Right ventricle myocardium superior (tissue), 1 donor: ENCODE measurements at regions of chr18 and their contacts with region 1.

Region 1: GRCh38 chr18:79011300-79011870 is 31.8 kb downstream of the SALL3 start:
- DNase-seq: no peak
- ATAC-seq: no peak

Region 2: DNA sequence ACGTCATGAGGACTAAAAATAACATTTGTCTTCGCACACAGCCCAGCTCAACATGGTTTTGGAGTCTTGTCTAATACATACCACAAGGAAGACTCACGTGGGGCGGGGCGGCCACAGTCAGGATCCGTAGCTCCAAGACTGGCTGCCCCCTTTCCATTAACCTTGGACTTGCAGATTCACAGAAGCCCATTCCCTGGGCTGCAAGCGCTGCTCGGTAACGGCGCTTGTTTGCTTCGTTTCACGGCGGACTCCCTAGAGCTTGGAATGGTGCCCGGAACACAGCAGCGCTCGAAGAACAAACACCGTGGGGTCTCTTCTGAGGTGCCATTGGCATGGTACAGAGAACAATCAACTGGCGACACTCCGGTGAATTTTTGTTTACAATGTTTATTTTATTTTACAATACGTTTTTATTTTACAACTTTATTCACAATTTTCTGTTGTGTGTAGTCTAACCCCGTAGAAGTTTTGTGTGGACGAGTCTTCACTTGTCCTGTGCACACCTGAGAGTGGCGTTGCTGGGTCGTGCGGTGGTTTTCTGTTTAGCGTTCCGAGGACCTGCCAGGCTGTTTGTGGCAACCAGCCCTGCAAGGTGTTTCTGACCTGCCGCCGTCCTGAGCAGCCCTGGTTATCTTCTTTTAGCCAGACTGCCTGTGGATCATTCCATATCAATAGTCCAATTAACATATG is 1635.2 kb before region 1 on chr18:
- intact Hi-C with region 1: no loop called
- DNase-seq: no peak
- ATAC-seq: no peak

Region 3: DNA sequence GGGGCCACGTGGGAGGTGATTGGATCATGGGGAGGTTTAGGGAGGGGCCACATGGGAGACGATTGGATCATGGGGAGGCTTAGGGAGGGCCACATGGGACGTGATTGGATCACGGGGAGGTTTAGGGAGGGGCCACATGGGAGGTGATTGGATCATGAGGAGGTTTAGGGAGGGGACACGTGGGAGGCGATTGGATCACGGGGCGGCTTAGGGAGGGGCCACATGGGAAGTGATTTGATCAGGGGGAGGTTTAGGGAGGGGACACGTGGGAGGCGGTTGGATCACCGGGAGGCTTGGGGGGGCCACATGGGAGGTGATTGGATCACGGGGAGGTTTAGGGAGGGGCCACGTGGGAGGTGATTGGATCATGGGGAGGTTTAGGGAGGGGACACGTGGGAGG is 54.2 kb before region 1 on chr18:
- intact Hi-C with region 1: loop called (anchors 10 kb)
- DNase-seq: no peak
- ATAC-seq: no peak